Activated naive CD4-positive, alpha-beta T cell treated with anti-CD3 and anti-CD28 coated beads for 36 hours (primary cell): ENCODE measurements at regions of chr1 and their contacts with region 1.

Region 1: DNA sequence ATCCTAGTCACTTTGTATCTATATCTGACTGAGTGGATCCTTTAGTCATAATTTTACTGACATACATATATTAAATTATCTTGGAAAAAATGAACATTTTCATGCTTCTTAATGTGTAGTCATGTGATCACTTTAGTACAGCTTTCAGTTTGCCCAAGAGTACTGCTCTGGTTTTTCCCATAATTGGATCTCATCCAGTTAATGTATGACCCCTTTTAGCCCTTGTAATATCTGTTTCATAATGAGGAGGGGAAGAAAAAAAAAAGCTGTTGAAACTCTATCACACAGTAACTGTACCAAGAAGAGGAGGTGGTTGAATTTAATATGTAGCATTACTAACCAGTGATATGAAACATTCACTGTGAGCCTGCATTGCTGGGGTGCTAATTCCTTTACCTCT is 328.7 kb downstream of the PTPRC start:
- DNase-seq: peak; percentile 12
- H3K4me3 Mint-ChIP-seq: no peak overlapping the region
- H3K27ac Mint-ChIP-seq: no peak overlapping the region
- H3K4me1 Mint-ChIP-seq: peaks cover 34% of the 10 kb centered on the region
- H3K27me3 Mint-ChIP-seq: no peaks in the 10 kb centered on the region

Region 2: DNA sequence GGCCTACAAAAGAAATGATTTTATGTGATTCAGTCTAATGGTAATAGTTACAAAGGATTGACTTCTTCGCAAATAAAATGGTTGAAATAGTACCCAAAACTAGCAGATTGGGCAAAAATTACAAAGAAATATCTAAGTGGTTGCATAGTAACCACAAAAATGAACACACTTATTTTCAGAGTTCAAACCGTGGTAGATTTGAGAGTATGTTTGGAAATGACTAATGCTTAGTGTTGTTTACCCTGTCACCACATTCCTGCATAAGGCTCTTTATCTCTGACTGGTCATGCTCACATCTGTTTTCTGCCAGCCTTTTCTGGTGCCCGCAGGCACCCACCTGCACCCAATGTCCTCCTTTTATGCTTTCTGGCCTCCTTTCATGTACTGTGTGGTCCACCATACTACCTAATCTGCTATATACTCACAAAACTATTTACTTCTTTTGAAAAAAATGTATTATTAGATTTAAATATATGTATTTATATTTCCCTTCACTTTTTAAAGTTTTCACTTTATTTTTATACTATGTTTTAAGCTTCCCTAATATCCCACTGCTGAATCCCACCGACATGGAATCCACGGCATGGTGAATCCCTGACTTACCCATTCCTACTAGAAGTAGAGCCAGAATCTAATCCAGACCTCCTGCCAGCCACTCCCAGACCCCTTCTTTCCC is 298.4 kb before region 1 on chr1:
- CTCF ChIA-PET with region 1: no interaction called
- intact Hi-C with region 1: no loop called
- DNase-seq: peak; percentile 46
- H3K4me3 Mint-ChIP-seq: peak overlapping the region; percentile 57
- H3K27ac Mint-ChIP-seq: peak overlapping the region; percentile 84
- H3K4me1 Mint-ChIP-seq: peaks cover 87% of the 10 kb centered on the region
- H3K27me3 Mint-ChIP-seq: no peaks in the 10 kb centered on the region

Region 3: DNA sequence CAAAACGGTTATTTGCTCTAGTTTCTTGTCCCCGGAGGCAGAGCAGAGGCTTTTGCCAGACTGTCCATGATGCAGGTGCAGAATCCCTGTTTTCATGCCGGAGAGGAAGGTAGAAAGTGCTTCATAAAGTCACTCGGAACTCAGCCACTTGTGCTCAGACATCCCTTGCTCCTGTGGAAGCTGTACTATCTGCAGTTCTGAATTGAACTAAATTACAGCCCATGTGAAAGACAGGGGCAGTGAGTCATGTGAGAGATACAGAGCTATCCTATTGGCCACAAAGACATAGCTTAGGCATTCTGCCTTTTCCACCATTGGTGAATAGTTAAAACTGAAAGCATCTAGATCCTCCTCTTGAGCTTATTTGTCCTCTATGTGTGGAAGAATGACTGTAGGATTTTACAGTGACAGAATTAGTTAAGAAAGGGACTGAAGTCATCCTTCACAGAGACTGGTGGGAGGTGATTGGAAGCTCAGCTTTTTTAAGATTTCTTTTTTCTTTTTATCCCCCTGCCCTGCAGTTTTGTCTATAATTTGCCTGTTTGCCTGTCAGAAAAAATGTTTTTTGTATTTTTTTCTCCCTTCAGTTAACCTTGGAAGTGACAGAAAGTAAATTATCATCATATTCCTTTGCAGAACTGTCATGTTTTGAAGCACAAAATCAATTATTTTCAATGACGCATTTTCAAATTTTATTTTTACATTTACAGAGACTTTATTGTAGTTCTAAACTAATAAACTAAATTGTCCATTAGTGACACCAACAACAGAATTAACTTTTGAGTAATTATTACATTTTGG is 30.1 kb before region 1 on chr1:
- CTCF ChIA-PET with region 1: no interaction called
- intact Hi-C with region 1: no loop called
- DNase-seq: peak; percentile 72
- H3K4me3 Mint-ChIP-seq: peak overlapping the region; percentile 89
- H3K27ac Mint-ChIP-seq: peak overlapping the region; percentile 84
- H3K4me1 Mint-ChIP-seq: peaks cover 21% of the 10 kb centered on the region
- H3K27me3 Mint-ChIP-seq: no peaks in the 10 kb centered on the region

Region 4: GRCh38 chr1:199041173-199041914 is 73.8 kb after region 1 on chr1:
- CTCF ChIA-PET with region 1: no interaction called
- intact Hi-C with region 1: loop called (anchors 2 kb)
- DNase-seq: peak; percentile 34
- H3K4me3 Mint-ChIP-seq: peak overlapping the region; percentile 10
- H3K27ac Mint-ChIP-seq: peak overlapping the region; percentile 38
- H3K4me1 Mint-ChIP-seq: peaks cover 20% of the 10 kb centered on the region
- H3K27me3 Mint-ChIP-seq: no peaks in the 10 kb centered on the region

Region 5: GRCh38 chr1:199373139-199373538 is 405.6 kb after region 1 on chr1:
- CTCF ChIA-PET with region 1: no interaction called
- intact Hi-C with region 1: no loop called
- DNase-seq: no peak
- H3K4me3 Mint-ChIP-seq: no peak overlapping the region
- H3K27ac Mint-ChIP-seq: no peak overlapping the region
- H3K4me1 Mint-ChIP-seq: no peaks in the 10 kb centered on the region
- H3K27me3 Mint-ChIP-seq: peaks cover 5% of the 10 kb centered on the region